ENCODE measurements at regions of chr15 and their contacts with region 1.

Region 1: DNA sequence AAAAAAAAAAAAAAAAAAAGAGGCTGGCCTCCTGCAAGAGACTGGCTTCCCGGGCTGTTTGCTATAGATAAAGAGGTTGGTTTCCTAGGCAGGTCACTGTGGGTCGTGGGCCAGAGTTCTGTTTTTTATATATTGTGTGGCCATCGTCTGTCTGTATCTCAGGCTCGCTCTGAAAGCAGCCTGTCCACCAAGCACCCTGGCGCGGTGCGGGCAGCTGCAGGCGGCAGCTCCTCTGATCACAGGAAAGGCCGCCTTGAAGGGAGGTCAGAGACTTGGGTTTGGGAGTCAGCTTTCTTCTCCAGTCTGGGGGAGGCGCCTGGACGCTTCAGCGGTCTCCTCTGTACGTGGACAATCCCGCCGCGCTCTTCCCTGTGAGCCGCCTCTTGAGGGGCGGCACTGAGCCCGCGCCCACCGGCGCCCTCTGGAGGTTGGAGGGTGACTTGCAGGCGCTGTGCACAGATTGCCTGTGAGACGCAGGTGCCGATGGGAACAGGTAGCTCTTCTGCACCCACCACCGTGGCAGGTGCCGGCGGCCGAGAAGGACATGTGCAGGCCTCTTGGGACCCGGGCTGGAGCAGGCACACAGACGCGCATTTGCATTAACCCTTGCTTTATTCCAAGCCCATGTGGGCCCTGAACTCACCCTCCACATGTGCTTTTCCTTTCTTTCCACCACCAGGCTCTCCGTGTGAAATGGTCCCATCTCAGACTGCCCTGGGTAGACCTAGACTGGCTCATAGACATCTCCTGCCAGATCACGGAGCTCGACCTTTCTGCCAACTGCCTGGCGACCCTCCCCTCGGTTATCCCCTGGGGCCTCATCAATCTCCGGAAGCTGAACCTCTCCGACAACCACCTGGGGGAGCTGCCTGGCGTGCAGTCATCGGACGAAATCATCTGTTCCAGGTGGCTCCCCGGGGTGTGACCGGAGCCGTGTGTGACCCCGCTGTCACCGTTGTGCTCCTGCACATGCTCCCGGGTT is 89.3 kb downstream of the LRRK1 start:
- DNase-seq: peak; percentile 61 to 99
- H3K4me3 ChIP-seq: peak overlapping the region; percentile 32 to 61 (median 54)
- H3K27ac ChIP-seq: no peak overlapping the region
- H3K4me1 ChIP-seq: peaks cover 0 to 4% (median 0%) of the 10 kb centered on the region in 4 experiments; a peak in 2 of 7 replicates
- H3K27me3 ChIP-seq: peaks cover 0 to 6% (median 0%) of the 10 kb centered on the region in 4 experiments; a peak in 3 of 7 replicates
- CTCF ChIP-seq: peak; percentile 96 to 98 (median 97)
- EP300 ChIP-seq: no peak
- POLR2A ChIP-seq: no peak
- RAD21 ChIP-seq: peak; percentile 48 to 67

Region 2: DNA sequence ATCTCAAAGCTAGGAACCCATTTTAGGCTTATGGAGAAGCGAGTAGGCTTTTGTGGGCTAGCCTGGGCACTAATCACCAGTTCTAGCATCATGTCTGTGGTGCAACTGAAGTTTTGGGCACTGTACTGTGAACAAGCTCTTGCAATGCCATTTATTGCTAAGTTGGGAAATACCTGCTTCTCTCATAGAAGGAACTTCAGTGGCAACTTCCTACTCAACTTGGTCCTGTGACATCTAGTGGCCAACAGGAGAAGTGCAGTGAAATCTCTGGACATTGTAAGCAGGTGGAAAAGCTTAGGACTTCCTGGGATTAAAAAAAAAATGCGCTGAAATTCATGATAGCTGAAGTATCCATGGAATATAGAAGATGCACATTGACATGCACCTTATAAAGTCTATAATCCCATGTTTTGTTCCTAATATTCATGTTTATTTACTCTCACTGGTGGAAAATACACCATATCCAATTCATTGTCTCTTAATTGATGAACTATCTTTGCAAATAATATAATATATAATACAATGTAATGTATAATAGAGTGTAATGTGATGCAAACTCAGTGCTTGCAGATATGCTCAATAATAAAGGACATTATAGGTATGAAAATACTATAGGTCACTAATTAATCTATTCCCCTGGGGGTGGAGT is 135.3 kb before region 1 on chr15:
- CTCF ChIA-PET with region 1: interaction called, 23 read pairs
- POLR2A ChIA-PET with region 1: no interaction called
- DNase-seq: peak in 1 of 2 experiments; percentile 74
- H3K4me3 ChIP-seq: no peak overlapping the region
- H3K27ac ChIP-seq: no peak overlapping the region
- H3K4me1 ChIP-seq: peaks cover 0 to 6% (median 3%) of the 10 kb centered on the region in 4 experiments; a peak in 2 of 7 replicates
- H3K27me3 ChIP-seq: peaks cover 0 to 11% (median 8%) of the 10 kb centered on the region in 4 experiments; a peak in 6 of 7 replicates
- CTCF ChIP-seq: peak in 2 of 3 experiments; percentile 80 to 88; a peak in 3 of 4 replicates
- EP300 ChIP-seq: no peak
- POLR2A ChIP-seq: no peak
- RAD21 ChIP-seq: peak; percentile 71 to 77

Region 3: DNA sequence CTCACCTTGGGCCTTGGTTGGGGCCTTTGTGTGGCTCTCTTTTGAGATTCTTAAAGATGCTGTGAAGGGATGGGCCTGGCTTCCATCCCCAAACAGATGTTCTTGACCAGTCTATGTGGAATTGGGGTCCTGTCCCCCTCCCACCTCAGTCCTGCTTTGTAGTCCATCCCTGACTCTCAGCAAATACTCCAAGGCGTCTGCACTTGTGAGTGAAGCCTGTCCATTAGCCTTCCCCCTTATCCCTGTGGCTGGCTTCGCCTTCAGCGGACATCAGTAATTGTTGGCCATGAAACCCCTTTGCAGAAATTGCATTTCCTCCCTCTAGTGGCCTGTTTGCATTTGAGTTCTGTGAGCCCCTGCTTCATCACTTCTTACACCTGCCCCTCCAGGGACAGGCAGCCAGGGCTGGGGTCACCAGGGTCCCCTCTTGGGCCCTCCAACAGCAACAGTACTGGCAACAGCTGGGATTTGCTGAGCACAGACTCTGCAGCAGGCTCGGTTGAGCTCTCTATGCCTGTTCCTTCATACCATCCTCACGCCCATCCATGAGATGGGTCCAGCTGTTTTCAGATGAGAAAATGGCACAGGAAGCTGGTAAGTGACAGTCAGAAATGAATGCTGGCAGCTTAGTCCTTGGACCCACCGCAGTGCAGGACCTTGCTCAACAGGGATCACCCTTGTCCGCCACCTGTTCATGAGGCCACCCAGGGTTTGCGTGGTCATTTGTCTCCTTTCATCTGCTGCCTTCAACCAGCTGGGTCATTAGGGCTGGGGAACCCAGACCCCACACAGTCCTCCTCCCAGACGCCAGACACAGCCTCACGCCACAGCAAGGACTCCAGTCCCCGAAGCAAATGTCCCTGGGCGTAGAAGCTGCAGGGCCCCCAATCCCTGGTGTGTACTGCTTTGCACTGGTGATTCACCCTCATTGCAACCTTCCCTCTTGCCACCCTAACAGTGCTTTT is 98.2 kb before region 1 on chr15:
- CTCF ChIA-PET with region 1: interaction called, 405 read pairs
- POLR2A ChIA-PET with region 1: no interaction called
- DNase-seq: no peak
- H3K4me3 ChIP-seq: no peak overlapping the region
- H3K27ac ChIP-seq: 0 out of 2 replicates have a peak overlapping the region, but pooled peaks have one; percentile 31
- H3K4me1 ChIP-seq: no peaks in the 10 kb centered on the region; a peak in 2 of 7 replicates
- H3K27me3 ChIP-seq: no peaks in the 10 kb centered on the region; a peak in 2 of 7 replicates
- CTCF ChIP-seq: peak; percentile 12 to 48 (median 48)
- EP300 ChIP-seq: no peak
- POLR2A ChIP-seq: no peak
- RAD21 ChIP-seq: peak in 1 of 2 experiments; percentile 31; a peak in 2 of 4 replicates

Region 4: GRCh38 chr15:100973351-100974111 is 34.9 kb before region 1 on chr15:
- CTCF ChIA-PET with region 1: interaction called, 32 read pairs
- POLR2A ChIA-PET with region 1: no interaction called
- DNase-seq: peak in 1 of 2 experiments; percentile 62
- H3K4me3 ChIP-seq: peak overlapping the region; percentile 19 to 60 (median 44)
- H3K27ac ChIP-seq: no peak overlapping the region
- H3K4me1 ChIP-seq: peaks cover 0 to 13% (median 4%) of the 10 kb centered on the region in 4 experiments; a peak in 6 of 7 replicates
- H3K27me3 ChIP-seq: peaks cover 13 to 38% (median 27%) of the 10 kb centered on the region in 4 experiments
- CTCF ChIP-seq: peak in 1 of 3 experiments; percentile 30; a peak in 1 of 4 replicates
- EP300 ChIP-seq: no peak
- POLR2A ChIP-seq: no peak
- RAD21 ChIP-seq: peak; percentile 20 to 55; a peak in 3 of 4 replicates

Region 5: DNA sequence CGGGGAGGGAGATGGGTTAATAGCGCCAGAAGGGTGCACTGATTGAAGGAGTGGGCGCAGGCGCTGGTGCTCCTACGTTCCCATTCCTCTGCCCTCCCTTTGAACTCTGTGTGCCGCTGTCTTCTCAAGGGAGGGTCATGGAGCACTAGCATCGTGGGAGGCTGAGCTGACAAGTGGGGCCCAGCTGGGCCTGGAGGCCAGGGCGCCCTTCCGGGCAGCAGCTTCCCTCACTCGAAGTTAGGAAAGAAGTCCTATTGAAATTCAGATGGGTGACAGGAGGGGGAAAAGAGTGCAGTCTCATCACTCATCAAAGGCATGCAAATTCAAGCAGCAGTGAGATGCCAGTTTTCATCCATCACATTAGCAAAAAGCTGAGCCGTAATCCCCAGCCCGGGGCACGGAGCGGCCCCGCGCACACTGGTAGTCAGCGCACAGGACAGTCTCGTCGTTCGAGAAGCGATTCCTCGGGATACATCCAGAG is 38.9 kb after region 1 on chr15:
- CTCF ChIA-PET with region 1: interaction called, 10 read pairs
- POLR2A ChIA-PET with region 1: no interaction called
- DNase-seq: peak in 1 of 2 experiments; percentile 53
- H3K4me3 ChIP-seq: no peak overlapping the region; a peak in 1 of 8 replicates
- H3K27ac ChIP-seq: no peak overlapping the region
- H3K4me1 ChIP-seq: peaks cover 0 to 9% (median 5%) of the 10 kb centered on the region in 4 experiments; a peak in 6 of 7 replicates
- H3K27me3 ChIP-seq: 0 out of 7 replicates have a peak, but pooled peaks cover 0 to 2% (median 0%) of the 10 kb centered on the region in 4 experiments
- CTCF ChIP-seq: no peak
- EP300 ChIP-seq: no peak
- POLR2A ChIP-seq: no peak
- RAD21 ChIP-seq: no peak

Region 6: DNA sequence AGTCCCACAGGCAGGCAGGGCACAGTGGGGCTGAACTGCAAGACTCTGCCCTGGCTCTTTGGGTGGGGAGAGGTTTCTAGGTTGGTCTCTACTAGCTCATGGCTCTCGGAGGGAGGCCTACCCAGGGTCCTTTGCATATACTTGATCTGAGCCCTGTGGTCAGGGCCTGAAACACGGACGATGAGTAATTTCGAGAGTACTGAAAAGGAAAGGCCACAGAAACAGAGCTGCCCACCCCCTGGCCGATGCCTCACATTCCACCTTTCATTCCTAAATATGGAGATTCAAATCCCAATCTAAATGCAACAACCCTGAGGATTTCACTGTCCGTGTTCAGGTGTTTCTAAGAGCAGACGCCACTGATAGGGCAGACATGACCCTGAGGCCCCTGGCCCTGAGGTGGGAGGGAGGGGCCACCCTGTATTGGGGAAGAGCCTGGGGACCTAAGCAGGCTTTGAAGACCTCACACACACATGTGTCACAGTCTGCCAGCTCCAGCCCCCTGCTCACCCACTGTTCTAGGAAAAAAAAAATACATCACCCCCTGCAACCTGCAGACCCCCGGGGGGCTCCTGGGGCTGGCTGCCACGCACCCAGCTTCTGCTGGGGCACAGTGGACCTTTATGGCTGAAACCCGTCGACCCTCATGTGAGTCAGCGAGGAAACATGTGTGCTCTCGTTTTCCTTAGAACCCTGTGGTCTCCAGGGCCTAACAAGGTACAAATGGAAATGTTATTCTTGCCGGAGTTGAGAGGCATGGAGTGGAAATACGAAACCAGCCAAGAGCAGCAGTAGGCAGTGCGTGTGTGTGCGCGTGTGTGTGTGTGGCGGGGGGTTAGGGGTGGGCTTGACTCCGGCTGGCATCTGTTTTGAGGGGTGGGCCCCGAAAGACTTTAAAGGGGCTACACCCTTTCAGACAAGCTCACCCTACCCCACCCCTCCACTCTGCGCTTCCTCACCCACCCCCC is 130.7 kb after region 1 on chr15:
- CTCF ChIA-PET with region 1: interaction called, 12 read pairs
- POLR2A ChIA-PET with region 1: interaction called, 3 read pairs
- DNase-seq: no peak
- H3K4me3 ChIP-seq: no peak overlapping the region
- H3K27ac ChIP-seq: no peak overlapping the region
- H3K4me1 ChIP-seq: peaks cover 0 to 5% (median 0%) of the 10 kb centered on the region in 4 experiments; a peak in 1 of 7 replicates
- H3K27me3 ChIP-seq: no peaks in the 10 kb centered on the region; a peak in 1 of 7 replicates
- CTCF ChIP-seq: no peak
- EP300 ChIP-seq: no peak
- POLR2A ChIP-seq: no peak
- RAD21 ChIP-seq: no peak

Region 7: DNA sequence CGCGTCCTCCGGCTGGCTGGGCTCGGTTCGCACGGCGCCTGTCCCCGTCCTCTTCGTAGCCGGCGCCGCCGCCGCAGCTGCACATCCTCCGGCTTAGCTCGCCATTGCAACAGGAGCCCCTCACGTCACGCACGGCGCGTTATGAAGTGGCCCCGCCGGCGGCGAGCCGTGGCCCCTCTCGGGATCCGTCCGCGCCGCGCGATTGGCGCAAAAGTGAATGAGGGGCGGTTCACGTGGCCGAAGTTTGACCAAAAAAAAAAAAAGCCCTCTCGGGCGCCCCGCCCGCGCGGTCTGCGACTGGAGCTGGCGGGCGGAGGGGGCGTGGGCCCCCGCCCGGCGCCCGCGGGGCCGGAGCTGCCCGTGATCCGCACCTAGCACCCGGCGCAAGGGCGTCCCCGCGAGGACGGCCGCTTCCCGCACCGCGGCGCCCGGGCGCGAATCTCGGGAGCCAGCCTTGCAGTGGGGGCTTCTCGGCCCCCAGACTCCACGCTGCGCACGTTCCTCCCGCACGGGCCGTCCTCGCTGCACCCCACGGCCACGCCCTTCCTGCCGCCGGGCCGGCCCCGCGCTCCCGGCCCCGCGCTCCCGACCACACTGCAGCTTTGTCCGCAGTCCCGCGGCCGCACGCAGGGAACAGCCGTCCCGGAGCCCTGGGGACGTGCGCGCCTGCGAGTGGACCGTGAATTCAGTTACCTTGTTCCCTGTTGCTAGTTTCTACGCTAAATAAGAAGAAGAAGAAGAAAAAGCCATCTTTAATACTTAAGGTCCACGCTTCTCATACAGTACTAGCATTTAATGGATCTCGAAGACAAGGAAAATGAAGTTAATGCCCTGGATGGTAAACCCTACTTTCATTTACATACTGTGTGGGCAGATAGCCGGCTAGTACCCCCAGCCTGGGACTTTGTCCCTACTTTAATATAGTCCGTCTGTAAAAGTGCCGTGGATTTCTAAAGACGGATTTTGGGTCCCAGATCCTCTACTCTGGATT is 243.7 kb after region 1 on chr15 and contains the start of gene CHSY1:
- CTCF ChIA-PET with region 1: interaction called, 216 read pairs
- POLR2A ChIA-PET with region 1: interaction called, 4 read pairs
- DNase-seq: peak in 1 of 2 experiments; percentile 80
- H3K4me3 ChIP-seq: peak within 1 kb of the TSS; percentile 55 to 77 (median 74)
- H3K27ac ChIP-seq: peak within 1 kb of the TSS; percentile 18; the same call in 1 of the 2 replicates
- H3K4me1 ChIP-seq: peaks cover 6 to 14% (median 11%) of the 10 kb centered on the region in 4 experiments
- H3K27me3 ChIP-seq: peaks cover 0 to 3% (median 0%) of the 10 kb centered on the region in 4 experiments; a peak in 3 of 7 replicates
- CTCF ChIP-seq: no peak
- EP300 ChIP-seq: no peak
- POLR2A ChIP-seq: peak in 1 of 2 experiments; percentile 36; a peak in 2 of 3 replicates
- RAD21 ChIP-seq: peak in 1 of 2 experiments; percentile 17; a peak in 1 of 4 replicates
- total RNA-seq, gene CHSY1: 60.3 and 60.7 TPM in 2 replicates

Measured in H1 (cell line).